K562 (cell line): ENCODE measurements at regions of chr4 and their contacts with region 1.

Region 1: GRCh38 chr4:48779998-48780742 is at the start of gene FRYL:
- DNase-seq: peak; percentile 97 to 99 (median 98)
- ATAC-seq: peak; percentile 90
- H3K4me3 ChIP-seq: peak within 1 kb of the TSS; percentile 88
- H3K27ac ChIP-seq: peak within 1 kb of the TSS; percentile 88
- H3K4me1 ChIP-seq: peaks cover 9 to 20% of the 10 kb centered on the region in 2 experiments
- H3K27me3 ChIP-seq: no peaks in the 10 kb centered on the region
- CTCF ChIP-seq: no peak
- EP300 ChIP-seq: no peak
- POLR2A ChIP-seq: peak; percentile 82
- RAD21 ChIP-seq: no peak
- polyA plus RNA-seq, gene FRYL: 7.2 TPM

Region 2: DNA sequence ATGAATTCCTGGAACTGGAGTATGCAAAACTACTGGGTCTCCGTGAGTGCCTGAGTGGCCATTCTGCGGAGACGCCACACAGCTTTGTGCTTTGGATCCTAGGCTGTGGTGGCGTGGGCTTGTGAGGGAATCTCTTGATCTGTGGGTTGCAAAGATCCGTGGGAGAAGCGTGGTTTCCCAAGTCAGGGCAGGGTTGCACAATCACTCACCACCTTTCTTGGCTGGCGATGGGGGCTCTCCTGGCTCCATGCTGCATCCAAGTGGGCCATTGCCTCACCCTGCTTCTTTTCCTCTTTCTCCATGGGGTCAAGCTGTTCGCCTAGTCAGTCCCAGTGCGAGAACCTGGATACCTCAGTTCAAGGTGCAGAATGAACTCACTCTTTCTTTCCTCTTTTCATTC is 376.4 kb before region 1 on chr4:
- CTCF ChIA-PET with region 1: no interaction called
- POLR2A ChIA-PET with region 1: no interaction called
- in situ Hi-C with region 1: no loop called
- intact Hi-C with region 1: no loop called
- DNase-seq: no peak
- ATAC-seq: no peak
- H3K4me3 ChIP-seq: no peak overlapping the region
- H3K27ac ChIP-seq: no peak overlapping the region
- H3K4me1 ChIP-seq: no peaks in the 10 kb centered on the region
- H3K27me3 ChIP-seq: no peaks in the 10 kb centered on the region
- CTCF ChIP-seq: no peak
- EP300 ChIP-seq: no peak
- POLR2A ChIP-seq: no peak
- RAD21 ChIP-seq: no peak

Region 3: GRCh38 chr4:48578132-48578968 is 201.8 kb before region 1 on chr4:
- CTCF ChIA-PET with region 1: no interaction called
- POLR2A ChIA-PET with region 1: no interaction called
- in situ Hi-C with region 1: no loop called
- intact Hi-C with region 1: loop called (anchors 1 kb)
- DNase-seq: peak; percentile 45 to 77 (median 58)
- ATAC-seq: peak; percentile 94
- H3K4me3 ChIP-seq: no peak overlapping the region
- H3K27ac ChIP-seq: no peak overlapping the region
- H3K4me1 ChIP-seq: no peaks in the 10 kb centered on the region
- H3K27me3 ChIP-seq: no peaks in the 10 kb centered on the region
- CTCF ChIP-seq: peak; percentile 76 to 84 (median 80)
- EP300 ChIP-seq: no peak
- POLR2A ChIP-seq: no peak
- RAD21 ChIP-seq: peak; percentile 91 to 96

Region 4: DNA sequence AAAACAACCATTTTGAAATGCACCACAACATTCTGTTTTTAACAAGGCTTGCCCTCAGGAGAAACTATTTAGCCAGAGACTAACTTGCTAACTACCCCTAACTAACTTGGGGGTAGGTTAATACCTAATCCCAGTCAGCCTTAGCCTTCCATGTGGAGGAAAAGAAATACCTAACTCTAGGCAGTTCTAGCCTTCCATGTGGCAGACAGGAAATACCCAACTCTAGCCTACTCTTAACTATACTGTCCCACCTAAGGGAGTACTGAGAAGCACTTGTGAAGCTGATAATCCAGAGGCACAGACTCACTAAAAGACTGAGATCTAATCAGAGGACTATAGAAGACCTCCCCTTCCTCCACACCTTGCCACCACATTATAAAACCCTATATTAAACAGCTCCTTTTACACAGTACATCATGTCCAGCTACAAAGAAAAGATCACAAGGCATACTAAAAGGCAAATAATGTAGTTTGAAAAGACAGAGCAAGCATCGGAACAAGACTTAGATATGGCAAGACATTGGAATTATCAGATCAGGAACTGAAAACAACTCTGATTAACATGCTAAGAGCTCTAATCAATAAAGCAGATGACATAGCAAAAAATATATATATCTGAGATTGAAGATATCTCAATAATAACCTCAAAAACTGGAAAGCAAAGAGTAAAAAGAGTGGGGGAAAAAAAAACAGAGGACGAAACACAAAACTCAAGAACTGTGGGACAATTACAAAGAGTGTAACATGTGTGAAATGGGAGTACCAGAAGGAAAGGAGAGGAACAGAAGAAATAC is 52.3 kb before region 1 on chr4:
- CTCF ChIA-PET with region 1: no interaction called
- POLR2A ChIA-PET with region 1: interaction called, 3 read pairs
- in situ Hi-C with region 1: no loop called
- intact Hi-C with region 1: loop called (anchors 5 kb)
- DNase-seq: peak in 1 of 4 experiments; percentile 37
- ATAC-seq: peak; percentile 69
- H3K4me3 ChIP-seq: no peak overlapping the region
- H3K27ac ChIP-seq: peak overlapping the region; percentile 37; the same call in 2 of the 3 replicates
- H3K4me1 ChIP-seq: peaks cover 12 to 46% of the 10 kb centered on the region in 2 experiments; a peak in 3 of 5 replicates
- H3K27me3 ChIP-seq: no peaks in the 10 kb centered on the region
- CTCF ChIP-seq: no peak
- EP300 ChIP-seq: no peak
- POLR2A ChIP-seq: no peak
- RAD21 ChIP-seq: no peak

Region 5: DNA sequence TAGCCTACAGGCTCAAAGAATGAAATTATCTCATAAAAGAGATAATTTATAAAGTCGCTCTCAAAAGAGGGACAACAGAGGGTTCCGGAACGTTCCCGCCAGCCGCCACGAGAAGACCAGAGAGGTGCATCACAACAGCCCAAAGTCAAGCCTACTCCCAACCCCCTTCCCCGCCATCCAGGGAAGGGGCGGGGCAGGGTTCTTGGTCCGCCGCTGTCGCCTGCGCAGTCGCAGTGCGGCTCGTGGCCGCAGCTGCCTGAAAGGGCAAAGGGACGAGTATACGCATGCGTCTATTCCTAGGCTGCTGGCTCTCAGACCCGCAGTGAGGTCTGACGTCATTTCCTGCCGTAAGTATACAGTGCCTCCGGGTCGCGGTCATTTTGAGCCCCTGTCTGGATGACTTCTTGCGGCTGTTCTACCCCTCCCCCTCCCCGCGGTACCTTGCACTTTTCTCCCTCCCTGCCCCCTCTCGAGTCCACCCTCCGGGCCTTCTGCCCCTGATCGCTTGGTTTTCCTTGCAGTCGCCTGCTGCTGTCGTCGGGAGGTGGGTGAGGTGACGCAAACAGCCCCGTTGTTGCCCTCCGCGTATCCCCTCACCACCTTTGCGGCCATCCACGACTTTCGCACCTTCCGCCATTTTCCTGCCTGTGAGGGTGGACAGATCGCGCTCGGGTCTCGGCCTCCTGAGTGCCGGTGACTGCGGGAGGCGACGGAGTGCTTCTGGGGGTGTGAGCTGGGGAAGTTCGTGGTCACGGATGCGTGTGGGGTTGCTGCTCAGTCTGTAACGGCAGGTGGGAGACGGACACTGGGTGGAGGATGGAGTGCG is 50.7 kb after region 1 on chr4 and contains the start of gene OCIAD1:
- CTCF ChIA-PET with region 1: no interaction called
- POLR2A ChIA-PET with region 1: no interaction called
- in situ Hi-C with region 1: no loop called
- intact Hi-C with region 1: loop called (anchors 2 kb)
- DNase-seq: peak; percentile 97 to 99 (median 98)
- ATAC-seq: peak; percentile 97
- H3K4me3 ChIP-seq: peak within 1 kb of the TSS; percentile 74
- H3K27ac ChIP-seq: peak within 1 kb of the TSS; percentile 94
- H3K4me1 ChIP-seq: peaks cover 6% of the 10 kb centered on the region in 2 experiments; a peak in 3 of 5 replicates
- H3K27me3 ChIP-seq: no peaks in the 10 kb centered on the region
- CTCF ChIP-seq: no peak
- EP300 ChIP-seq: peak; percentile 11; the same call in 1 of the 2 replicates
- POLR2A ChIP-seq: peak; percentile 95
- RAD21 ChIP-seq: no peak; a peak in 1 of 4 replicates
- polyA plus RNA-seq, gene OCIAD1: 204 to 222 TPM

Region 6: GRCh38 chr4:48898733-48899431 is 118.7 kb after region 1 on chr4:
- CTCF ChIA-PET with region 1: no interaction called
- POLR2A ChIA-PET with region 1: interaction called, 3 read pairs
- in situ Hi-C with region 1: no loop called
- intact Hi-C with region 1: loop called (anchors 5 kb)
- DNase-seq: peak in 2 of 4 experiments; percentile 53 to 70
- ATAC-seq: peak; percentile 89
- H3K4me3 ChIP-seq: 0 out of 2 replicates have a peak overlapping the region, but pooled peaks have one; percentile 4
- H3K27ac ChIP-seq: peak overlapping the region; percentile 65
- H3K4me1 ChIP-seq: peaks cover 0 to 17% of the 10 kb centered on the region in 2 experiments; a peak in 3 of 5 replicates
- H3K27me3 ChIP-seq: no peaks in the 10 kb centered on the region
- CTCF ChIP-seq: no peak
- EP300 ChIP-seq: peak; percentile 38; the same call in 1 of the 2 replicates
- POLR2A ChIP-seq: no peak
- RAD21 ChIP-seq: no peak

Region 7: GRCh38 chr4:48963042-48963679 is 183.0 kb after region 1 on chr4:
- CTCF ChIA-PET with region 1: no interaction called
- POLR2A ChIA-PET with region 1: no interaction called
- in situ Hi-C with region 1: no loop called
- intact Hi-C with region 1: loop called (anchors 5 kb)
- DNase-seq: peak; percentile 72 to 86 (median 76)
- ATAC-seq: peak; percentile 93
- H3K4me3 ChIP-seq: no peak overlapping the region
- H3K27ac ChIP-seq: no peak overlapping the region
- H3K4me1 ChIP-seq: no peaks in the 10 kb centered on the region
- H3K27me3 ChIP-seq: no peaks in the 10 kb centered on the region
- CTCF ChIP-seq: peak; percentile 98 to 100 (median 100)
- EP300 ChIP-seq: no peak
- POLR2A ChIP-seq: no peak
- RAD21 ChIP-seq: peak; percentile 95